ENCODE measurements at regions of chrX and their contacts with region 1.

Region 1: GRCh38 chrX:153667956-153668396 is 5.6 kb downstream of the PNCK start:
- DNase-seq: peak; percentile 51
- ATAC-seq: peak; percentile 84
- H3K4me3 ChIP-seq: peak overlapping the region in 2 of 3 experiments; percentile 7 to 16; a peak in 1 of 6 replicates
- H3K27ac ChIP-seq: no peak overlapping the region
- H3K4me1 ChIP-seq: peaks cover 43% of the 10 kb centered on the region
- H3K27me3 ChIP-seq: peaks cover 0 to 14% of the 10 kb centered on the region in 2 experiments; a peak in 2 of 5 replicates
- CTCF ChIP-seq: peak; percentile 93
- EP300 ChIP-seq: no peak
- POLR2A ChIP-seq: no peak
- RAD21 ChIP-seq: peak; percentile 74

Region 2: DNA sequence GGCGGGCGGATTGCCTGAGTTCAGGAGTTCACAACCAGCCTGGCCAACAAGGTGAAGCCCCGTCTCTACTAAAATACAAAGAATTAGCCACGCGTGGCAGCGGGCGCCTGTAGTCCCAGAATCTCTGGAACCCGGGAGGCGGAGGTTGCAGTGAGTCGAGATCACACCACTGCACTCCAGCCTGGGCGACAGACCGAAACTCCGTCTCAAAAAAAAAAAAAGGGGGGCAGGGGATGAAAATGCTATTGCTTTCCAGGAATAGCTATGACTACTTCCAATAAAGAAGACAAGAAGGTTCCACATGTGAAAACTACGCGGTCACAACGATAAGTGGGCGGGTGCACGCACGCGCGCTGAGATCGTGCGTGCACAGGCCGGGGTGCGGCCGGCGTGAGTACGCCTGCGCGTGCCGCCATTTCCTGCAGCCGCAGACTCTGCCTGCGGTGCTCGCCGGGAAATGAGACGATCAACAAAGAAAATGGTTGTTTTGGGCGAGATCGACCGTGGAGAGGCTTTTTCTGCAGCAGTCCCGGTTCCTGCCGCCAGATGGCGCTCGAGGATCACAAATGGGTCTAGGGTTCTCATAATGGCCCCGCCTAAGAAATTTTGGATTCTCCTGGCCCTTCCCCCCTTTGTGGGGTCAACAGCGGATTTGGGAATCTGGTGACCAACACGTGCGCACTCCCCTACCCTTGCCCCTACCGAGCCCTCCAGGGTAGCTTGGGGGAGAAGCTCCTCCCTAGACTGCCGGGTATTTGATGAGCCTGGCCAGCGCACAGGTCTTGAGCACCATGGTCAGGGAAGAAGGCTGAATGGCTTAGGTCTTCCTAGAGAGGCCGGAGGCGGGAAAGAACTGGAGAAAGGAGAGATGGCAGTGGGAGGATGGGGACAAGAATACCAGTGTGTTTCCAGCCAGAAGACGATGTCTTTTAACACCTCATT is 709.2 kb before region 1 on chrX:
- CTCF ChIA-PET with region 1: no interaction called
- POLR2A ChIA-PET with region 1: no interaction called
- in situ Hi-C with region 1: loop called (anchors 25 kb)
- intact Hi-C with region 1: no loop called
- DNase-seq: peak; percentile 54
- ATAC-seq: peak; percentile 86
- H3K4me3 ChIP-seq: no peak overlapping the region
- H3K27ac ChIP-seq: no peak overlapping the region
- H3K4me1 ChIP-seq: no peaks in the 10 kb centered on the region
- H3K27me3 ChIP-seq: no peaks in the 10 kb centered on the region
- CTCF ChIP-seq: peak; percentile 79
- EP300 ChIP-seq: no peak
- POLR2A ChIP-seq: no peak
- RAD21 ChIP-seq: peak; percentile 82

Region 3: DNA sequence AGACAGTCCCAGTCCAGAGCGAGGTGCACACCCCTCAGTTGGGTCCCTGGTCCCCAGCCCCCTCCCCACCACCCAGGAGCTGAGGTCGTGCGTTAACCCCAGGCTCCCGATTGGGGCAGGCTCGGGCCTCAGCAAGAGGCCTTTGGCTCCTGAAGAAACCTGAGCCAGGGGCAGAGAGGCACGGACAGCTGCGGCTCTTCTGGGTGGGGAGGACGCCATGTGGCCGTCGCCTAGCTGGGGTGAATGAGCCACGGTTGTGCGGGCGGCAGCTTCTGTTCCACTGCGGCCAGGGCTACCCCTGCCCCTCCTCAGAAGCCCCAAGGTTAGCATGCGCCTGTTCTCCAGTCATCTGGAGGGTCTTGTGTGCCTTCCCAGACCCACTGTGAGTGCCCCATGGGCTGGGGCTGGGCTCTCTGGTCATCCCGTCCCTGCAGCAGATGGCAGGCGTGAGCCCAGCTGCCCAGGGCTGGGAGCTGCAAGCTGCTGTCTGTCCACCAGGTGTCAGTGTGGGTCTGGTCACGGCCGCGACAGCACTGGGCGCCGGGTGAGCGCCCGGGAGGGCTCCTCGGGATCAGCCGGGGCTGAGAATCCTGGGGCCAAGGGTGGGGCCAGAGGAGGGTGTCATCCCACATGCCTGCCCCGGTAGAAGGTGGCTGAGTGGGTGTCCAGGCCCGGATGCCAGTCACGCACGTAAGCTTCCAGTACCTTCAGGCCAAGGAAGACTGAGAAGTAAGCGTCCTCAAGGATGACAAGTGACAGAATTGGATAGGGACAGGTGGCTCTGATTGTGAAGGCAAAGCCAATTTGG is 128.6 kb before region 1 on chrX:
- CTCF ChIA-PET with region 1: interaction called, 25 read pairs
- POLR2A ChIA-PET with region 1: interaction called, 4 read pairs
- in situ Hi-C with region 1: no loop called
- intact Hi-C with region 1: loop called (anchors 1 kb)
- DNase-seq: peak; percentile 23
- ATAC-seq: peak; percentile 89
- H3K4me3 ChIP-seq: no peak overlapping the region
- H3K27ac ChIP-seq: no peak overlapping the region
- H3K4me1 ChIP-seq: 0 out of 2 replicates have a peak, but pooled peaks cover 5% of the 10 kb centered on the region
- H3K27me3 ChIP-seq: peaks cover 8 to 48% of the 10 kb centered on the region in 2 experiments; a peak in 4 of 5 replicates
- CTCF ChIP-seq: peak; percentile 93
- EP300 ChIP-seq: no peak
- POLR2A ChIP-seq: no peak
- RAD21 ChIP-seq: peak; percentile 82

Region 4: GRCh38 chrX:153554519-153555167 is 113.3 kb before region 1 on chrX:
- CTCF ChIA-PET with region 1: interaction called, 35 read pairs
- POLR2A ChIA-PET with region 1: no interaction called
- in situ Hi-C with region 1: loop called (anchors 5 kb)
- intact Hi-C with region 1: loop called (anchors 2 kb)
- DNase-seq: peak; percentile 27
- ATAC-seq: peak; percentile 82
- H3K4me3 ChIP-seq: no peak overlapping the region
- H3K27ac ChIP-seq: no peak overlapping the region
- H3K4me1 ChIP-seq: peaks cover 5% of the 10 kb centered on the region; the same call in 1 of the 2 replicates
- H3K27me3 ChIP-seq: peaks cover 0 to 47% of the 10 kb centered on the region in 2 experiments; a peak in 3 of 5 replicates
- CTCF ChIP-seq: peak; percentile 81
- EP300 ChIP-seq: no peak
- POLR2A ChIP-seq: no peak
- RAD21 ChIP-seq: peak; percentile 48; the same call in 1 of the 2 replicates

Measured in HepG2 (cell line).